ENCODE measurements at regions of chr7 and their contacts with region 1.

Region 1: GRCh38 chr7:26843705-26844104 is 20.7 kb downstream of the SKAP2 start:
- DNase-seq: peak; percentile 16
- H3K4me3 ChIP-seq: no peak overlapping the region
- H3K27ac ChIP-seq: no peak overlapping the region
- H3K4me1 ChIP-seq: no peaks in the 10 kb centered on the region
- H3K27me3 ChIP-seq: no peaks in the 10 kb centered on the region
- CTCF ChIP-seq: peak in 1 of 2 donors; percentile 36

Region 2: DNA sequence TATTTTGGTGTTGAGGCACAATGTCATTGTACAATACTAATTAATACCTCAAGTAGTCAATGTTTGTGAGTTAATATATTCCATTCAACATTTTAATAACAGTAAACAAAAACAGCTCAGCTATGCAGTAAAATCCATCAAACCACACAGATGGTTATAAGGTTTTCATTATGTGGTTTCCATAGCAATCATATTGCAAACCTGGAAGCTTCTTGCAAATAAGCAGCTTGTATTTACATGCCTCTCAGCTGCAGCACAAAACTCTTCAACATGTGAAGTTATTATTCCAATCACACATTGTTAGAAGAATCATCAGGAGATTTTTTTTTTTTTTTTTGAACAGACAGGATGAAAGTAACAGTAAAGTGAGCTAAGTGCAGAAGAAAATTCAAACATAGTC is 149.6 kb before region 1 on chr7:
- CTCF ChIA-PET with region 1: no interaction called
- dilution Hi-C with region 1: no loop called
- in situ Hi-C with region 1: loop called in 1 of 2 experiments (anchors 10 kb)
- intact Hi-C with region 1: no loop called
- DNase-seq: peak; percentile 26
- H3K4me3 ChIP-seq: no peak overlapping the region
- H3K27ac ChIP-seq: no peak overlapping the region
- H3K4me1 ChIP-seq: peaks cover 23% of the 10 kb centered on the region
- H3K27me3 ChIP-seq: no peaks in the 10 kb centered on the region
- CTCF ChIP-seq: no peak